ENCODE measurements at regions of chr4 and their contacts with region 1.

Region 1: DNA sequence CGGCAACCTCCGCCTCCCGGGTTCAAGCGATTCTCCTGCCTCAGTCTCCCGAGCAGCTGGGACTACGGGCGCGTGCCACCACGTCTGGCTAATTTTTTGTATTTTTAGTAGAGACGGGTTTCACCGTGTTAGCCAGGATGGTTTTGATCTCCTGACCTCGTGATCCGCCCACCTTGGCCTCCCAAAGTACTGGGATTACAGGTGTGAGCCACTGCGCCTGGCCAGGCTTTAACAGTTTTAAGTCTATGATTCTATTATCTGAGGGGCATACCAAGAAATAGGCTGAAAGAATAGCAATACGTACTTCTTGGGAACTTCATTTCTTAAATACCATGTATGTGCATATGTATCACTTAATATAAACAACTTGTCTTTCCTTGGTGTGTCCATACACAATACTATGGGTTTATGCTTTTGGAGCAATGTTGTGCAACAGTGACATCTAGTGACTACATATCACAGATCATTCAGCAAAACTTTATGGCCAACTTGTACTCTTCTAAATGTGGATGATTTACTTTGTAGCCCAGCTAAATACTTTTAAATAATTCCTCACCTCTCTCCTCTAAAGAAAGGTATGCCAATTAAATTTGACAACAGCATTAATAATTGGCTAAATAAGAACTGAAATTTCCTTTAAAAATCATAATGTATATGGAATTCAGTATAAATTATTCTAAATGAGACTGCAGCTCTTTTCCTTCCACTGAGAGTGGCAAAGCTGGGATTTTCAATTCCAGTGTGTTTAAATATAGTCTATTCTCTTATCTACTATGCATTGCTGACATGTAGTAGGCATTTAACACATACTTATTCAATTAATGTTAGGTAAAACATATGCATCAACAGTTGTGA is 10.4 kb downstream of the SLC9B1 start:
- DNase-seq: no peak
- ATAC-seq: peak; percentile 58 to 89 (median 84)
- H3K4me3 ChIP-seq: no peak overlapping the region
- H3K27ac ChIP-seq: no peak overlapping the region
- H3K4me1 ChIP-seq: peaks cover 0 to 18% (median 10%) of the 10 kb centered on the region in 12 donors
- H3K27me3 ChIP-seq: no peaks in the 10 kb centered on the region
- CTCF ChIP-seq: peak; percentile 64 to 91 (median 74)
- POLR2A ChIP-seq: no peak

Region 2: DNA sequence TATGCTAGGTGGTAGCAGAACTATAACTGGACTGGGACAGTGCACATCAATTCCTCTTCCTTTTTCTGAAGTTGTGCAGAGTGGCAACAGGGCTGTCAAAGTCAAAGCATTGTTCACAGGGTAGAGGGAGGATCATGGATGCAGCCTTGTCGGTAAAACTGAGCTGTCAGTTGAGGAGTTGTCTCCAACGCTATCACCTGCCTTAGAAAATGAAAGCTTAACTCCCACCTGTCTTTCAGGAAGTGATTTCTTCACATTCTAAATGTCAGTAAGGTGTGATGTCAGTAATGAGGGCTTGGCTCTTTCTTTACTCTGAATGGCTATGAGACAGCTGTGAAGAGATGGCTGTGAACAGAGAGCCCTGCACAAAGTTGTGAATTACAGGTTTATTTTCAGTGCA is 1285.0 kb before region 1 on chr4:
- intact Hi-C with region 1: no loop called
- DNase-seq: no peak
- ATAC-seq: no peak
- H3K4me3 ChIP-seq: no peak overlapping the region
- H3K27ac ChIP-seq: no peak overlapping the region
- H3K4me1 ChIP-seq: no peaks in the 10 kb centered on the region
- H3K27me3 ChIP-seq: no peaks in the 10 kb centered on the region
- CTCF ChIP-seq: no peak
- POLR2A ChIP-seq: no peak

Region 3: GRCh38 chr4:102328045-102328444 is 681.1 kb before region 1 on chr4:
- intact Hi-C with region 1: no loop called
- DNase-seq: no peak
- ATAC-seq: no peak
- H3K4me3 ChIP-seq: no peak overlapping the region
- H3K27ac ChIP-seq: no peak overlapping the region
- H3K4me1 ChIP-seq: peaks cover 0 to 6% (median 0%) of the 10 kb centered on the region in 12 donors
- H3K27me3 ChIP-seq: no peaks in the 10 kb centered on the region
- CTCF ChIP-seq: no peak
- POLR2A ChIP-seq: no peak

Region 4: DNA sequence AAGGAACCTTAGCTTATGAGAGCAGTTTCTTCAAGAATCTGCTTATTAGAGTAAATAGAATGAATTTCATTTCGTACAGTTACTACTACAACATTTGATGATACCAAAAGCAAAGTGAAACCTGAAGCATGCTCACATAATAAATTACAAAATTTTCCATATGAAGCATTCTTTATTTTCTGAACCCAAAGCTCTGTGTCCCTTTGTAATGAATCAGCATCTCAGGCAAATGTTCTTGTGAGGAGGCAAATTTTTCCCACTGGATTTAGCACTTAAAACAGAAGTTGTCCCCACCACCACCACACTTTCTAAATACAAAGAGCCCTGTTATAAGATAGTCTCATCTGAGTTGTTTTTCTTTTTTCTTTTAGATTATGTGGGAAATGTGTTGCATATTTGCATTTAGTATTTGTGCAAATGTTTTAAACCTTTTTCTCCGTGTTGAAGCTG is 578.6 kb before region 1 on chr4:
- intact Hi-C with region 1: loop called in 1 of 10 experiments (anchors 5 kb)
- DNase-seq: no peak
- ATAC-seq: peak in 1 of 4 donors; percentile 33
- H3K4me3 ChIP-seq: peak overlapping the region; percentile 15 to 74 (median 62)
- H3K27ac ChIP-seq: peak overlapping the region in 9 of 12 donors; percentile 34 to 73 (median 58)
- H3K4me1 ChIP-seq: peaks cover 0 to 6% (median 0%) of the 10 kb centered on the region in 12 donors
- H3K27me3 ChIP-seq: no peaks in the 10 kb centered on the region
- CTCF ChIP-seq: no peak
- POLR2A ChIP-seq: no peak

Region 5: GRCh38 chr4:102439236-102439614 is 569.9 kb before region 1 on chr4:
- intact Hi-C with region 1: loop called in 2 of 10 experiments (anchors 5 kb)
- DNase-seq: peak in 1 of 5 donors; percentile 12
- ATAC-seq: peak; percentile 54 to 88 (median 68)
- H3K4me3 ChIP-seq: no peak overlapping the region
- H3K27ac ChIP-seq: peak overlapping the region in 7 of 12 donors; percentile 0 to 62 (median 50)
- H3K4me1 ChIP-seq: peaks cover 0 to 24% (median 13%) of the 10 kb centered on the region in 12 donors
- H3K27me3 ChIP-seq: no peaks in the 10 kb centered on the region
- CTCF ChIP-seq: no peak
- POLR2A ChIP-seq: no peak

Region 6: DNA sequence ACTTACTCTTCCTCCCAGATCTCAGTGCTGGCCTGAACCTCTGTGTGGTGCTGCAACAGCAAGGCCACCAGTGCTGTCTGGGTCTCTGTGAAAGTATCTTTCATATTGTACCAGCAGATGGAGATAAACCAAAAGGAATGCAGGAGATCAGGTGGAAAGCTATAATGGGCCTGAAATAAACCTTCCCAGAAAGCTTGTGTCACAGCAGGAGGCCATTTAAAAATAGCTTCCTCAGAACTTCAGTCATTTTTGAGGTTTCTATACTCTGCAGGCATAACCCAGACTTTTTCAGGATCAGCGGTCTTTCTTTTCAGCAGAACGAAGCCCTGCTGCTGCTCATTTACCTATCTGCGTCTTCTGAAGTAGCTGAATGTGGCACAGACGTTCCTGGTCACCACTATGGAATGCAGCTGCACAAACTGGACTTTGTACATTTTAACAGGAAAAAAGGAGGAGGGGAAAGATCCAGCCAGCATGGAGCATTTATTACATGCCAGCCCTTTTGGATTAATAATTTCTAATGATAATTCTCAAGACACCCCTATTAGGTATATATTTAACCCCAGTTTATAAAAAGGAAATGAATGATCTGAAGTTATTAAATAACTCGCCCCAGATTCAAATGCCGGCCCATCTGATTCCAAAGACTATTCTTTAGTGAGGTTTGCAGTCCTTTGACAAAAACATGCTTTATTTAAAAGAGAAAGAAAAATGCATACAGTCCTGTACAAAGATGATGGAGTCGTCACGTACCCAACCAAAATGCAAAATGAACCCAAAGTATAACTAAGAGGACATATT is 388.2 kb before region 1 on chr4:
- intact Hi-C with region 1: loop called (anchors 1 to 5 kb)
- DNase-seq: no peak
- ATAC-seq: peak; percentile 91 to 95 (median 92)
- H3K4me3 ChIP-seq: peak overlapping the region in 7 of 12 donors; percentile 1 to 35 (median 17)
- H3K27ac ChIP-seq: peak overlapping the region in 1 of 12 donors; percentile 58
- H3K4me1 ChIP-seq: peaks cover 0 to 19% (median 4%) of the 10 kb centered on the region in 12 donors
- H3K27me3 ChIP-seq: no peaks in the 10 kb centered on the region
- CTCF ChIP-seq: peak; percentile 18 to 64 (median 46)
- POLR2A ChIP-seq: no peak

Region 7: GRCh38 chr4:103054030-103054429 is 44.9 kb after region 1 on chr4:
- intact Hi-C with region 1: no loop called
- DNase-seq: no peak
- ATAC-seq: no peak
- H3K4me3 ChIP-seq: no peak overlapping the region
- H3K27ac ChIP-seq: no peak overlapping the region
- H3K4me1 ChIP-seq: no peaks in the 10 kb centered on the region
- H3K27me3 ChIP-seq: no peaks in the 10 kb centered on the region
- CTCF ChIP-seq: no peak
- POLR2A ChIP-seq: no peak

Region 8: GRCh38 chr4:104365618-104366017 is 1356.5 kb after region 1 on chr4:
- intact Hi-C with region 1: no loop called
- DNase-seq: no peak
- ATAC-seq: no peak
- H3K4me3 ChIP-seq: no peak overlapping the region
- H3K27ac ChIP-seq: no peak overlapping the region
- H3K4me1 ChIP-seq: no peaks in the 10 kb centered on the region
- H3K27me3 ChIP-seq: no peaks in the 10 kb centered on the region
- CTCF ChIP-seq: no peak
- POLR2A ChIP-seq: no peak

Measured in heart left ventricle (tissue), 16 donors.